Aorta (tissue), 5 donors: ENCODE measurements at regions of chr1 and their contacts with region 1.

Region 1: DNA sequence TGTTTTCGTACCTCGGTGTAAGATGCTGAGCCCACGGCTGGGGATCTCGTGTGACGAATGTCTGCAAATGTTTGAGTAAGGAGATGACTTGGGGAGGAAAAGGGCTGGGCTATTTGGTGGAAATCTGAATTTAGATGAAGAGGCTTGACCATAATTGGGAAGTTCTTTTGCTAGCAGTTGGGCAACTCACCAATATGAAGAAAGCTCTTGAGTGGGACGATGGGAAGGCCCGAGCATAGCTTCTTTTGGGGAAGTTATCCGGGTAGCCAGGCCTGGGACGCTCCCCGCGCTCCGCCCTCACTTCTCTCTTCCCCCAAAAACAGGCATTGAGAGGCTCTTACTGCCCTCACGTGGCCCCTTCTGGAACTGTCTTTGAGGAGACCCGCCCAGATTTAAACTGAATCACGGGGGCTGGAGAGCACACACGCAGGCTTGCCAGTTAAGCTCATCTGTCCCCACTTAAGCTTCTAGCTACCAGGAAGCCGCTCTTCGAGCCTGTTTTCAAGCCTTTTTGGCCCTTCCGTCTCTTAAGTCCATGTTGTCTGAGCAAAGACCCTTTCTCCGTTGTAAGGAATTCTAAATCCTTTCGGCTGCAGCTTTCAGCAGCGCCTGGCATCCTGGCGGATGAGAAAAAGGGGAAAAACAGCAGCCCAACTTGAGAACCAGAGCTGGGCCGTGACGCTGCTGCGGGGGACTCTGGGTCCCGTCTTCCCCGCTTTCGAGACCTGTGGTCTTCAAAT is 93.1 kb downstream of the NID1 start:
- DNase-seq: peak; percentile 96 to 97
- ATAC-seq: peak; percentile 97
- H3K4me3 ChIP-seq: peak overlapping the region in 1 of 2 donors; percentile 74
- H3K27ac ChIP-seq: peak overlapping the region; percentile 38 to 95
- H3K4me1 ChIP-seq: no peaks in the 10 kb centered on the region
- H3K27me3 ChIP-seq: no peaks in the 10 kb centered on the region

Region 2: DNA sequence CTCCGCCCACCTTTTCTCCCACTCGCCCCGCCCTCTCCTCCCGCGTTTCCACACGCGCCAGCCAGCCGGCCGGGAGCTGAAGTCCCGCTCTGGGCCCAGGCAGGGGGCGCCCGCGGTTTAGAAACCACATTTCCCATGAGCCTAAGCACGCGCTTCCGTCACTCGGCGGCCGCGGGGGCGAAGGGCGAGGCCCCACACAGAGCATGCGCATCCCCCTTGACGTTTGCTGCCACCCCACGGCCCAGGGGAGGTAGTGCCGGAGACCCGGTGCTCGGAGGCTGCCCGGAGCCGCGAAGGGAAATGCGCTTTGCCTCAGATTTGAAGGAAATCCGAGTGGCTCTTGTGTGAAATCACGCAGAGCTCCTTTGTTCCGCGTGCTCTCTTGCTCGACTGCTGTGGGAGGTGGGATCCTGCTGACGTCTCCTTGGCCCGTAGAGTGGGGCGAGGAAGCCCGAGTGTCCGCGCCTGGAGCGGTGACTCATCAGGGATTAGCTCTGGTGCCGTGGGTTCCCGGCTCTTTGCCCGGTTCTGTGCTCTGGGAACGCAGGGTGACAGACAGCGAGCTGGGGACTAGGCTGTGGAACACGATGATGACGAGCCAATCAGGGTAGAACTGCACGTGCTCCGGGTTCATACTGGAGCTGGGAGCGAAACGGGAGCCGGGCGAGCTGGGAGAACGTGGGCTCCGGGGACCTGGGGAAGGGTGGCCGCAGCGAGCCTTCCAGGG is 467.1 kb before region 1 on chr1:
- intact Hi-C with region 1: loop called in 1 of 2 experiments (anchors 5 kb)
- DNase-seq: peak; percentile 99 to 100
- ATAC-seq: peak; percentile 98
- H3K4me3 ChIP-seq: peak overlapping the region; percentile 46 to 96
- H3K27ac ChIP-seq: peak overlapping the region; percentile 93 to 96
- H3K4me1 ChIP-seq: peaks cover 0 to 4% of the 10 kb centered on the region in 2 donors
- H3K27me3 ChIP-seq: no peaks in the 10 kb centered on the region

Region 3: DNA sequence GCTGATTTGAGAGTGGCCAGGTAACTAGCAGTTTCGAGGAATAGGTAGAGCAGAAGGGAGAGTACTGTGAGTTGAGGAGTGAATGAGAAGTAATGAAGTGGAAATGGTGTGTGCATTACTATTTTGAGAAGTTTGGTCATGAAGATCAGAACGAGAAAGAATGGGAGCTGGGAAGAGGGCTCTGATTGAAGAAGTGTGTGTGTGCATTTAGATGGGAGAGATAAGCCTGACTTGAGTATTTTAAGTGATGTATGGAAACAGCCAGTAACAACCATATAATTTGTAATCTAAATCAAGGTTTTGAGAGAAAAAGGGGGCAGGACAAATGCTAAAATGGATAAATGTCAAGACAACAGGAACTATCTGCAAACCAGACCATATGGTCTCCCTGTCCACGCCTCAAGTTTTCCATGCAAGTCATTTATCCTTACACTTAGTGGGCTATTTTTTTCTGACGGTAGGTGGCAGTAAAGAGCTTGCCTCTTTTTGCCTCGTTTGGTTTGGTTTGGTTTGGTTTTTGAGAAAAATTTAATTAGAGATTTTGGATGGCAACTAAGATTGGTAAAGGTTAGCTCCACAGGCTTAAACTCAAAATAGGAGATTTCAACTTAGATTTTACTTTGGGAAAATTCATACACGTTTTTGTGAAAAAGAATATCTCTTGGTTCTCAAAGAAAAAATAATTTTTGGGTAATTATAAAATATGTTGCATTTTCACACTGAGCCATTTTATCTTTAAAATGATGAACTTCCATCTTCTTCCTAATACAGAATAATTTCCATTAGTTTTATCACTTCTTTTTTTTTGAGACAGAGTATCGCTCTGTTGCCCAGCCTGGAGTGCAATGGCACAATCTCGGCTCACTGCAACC is 458.0 kb before region 1 on chr1:
- intact Hi-C with region 1: loop called (anchors 5 to 10 kb)
- DNase-seq: no peak
- ATAC-seq: peak; percentile 71
- H3K4me3 ChIP-seq: no peak overlapping the region
- H3K27ac ChIP-seq: no peak overlapping the region
- H3K4me1 ChIP-seq: no peaks in the 10 kb centered on the region
- H3K27me3 ChIP-seq: no peaks in the 10 kb centered on the region

Region 4: DNA sequence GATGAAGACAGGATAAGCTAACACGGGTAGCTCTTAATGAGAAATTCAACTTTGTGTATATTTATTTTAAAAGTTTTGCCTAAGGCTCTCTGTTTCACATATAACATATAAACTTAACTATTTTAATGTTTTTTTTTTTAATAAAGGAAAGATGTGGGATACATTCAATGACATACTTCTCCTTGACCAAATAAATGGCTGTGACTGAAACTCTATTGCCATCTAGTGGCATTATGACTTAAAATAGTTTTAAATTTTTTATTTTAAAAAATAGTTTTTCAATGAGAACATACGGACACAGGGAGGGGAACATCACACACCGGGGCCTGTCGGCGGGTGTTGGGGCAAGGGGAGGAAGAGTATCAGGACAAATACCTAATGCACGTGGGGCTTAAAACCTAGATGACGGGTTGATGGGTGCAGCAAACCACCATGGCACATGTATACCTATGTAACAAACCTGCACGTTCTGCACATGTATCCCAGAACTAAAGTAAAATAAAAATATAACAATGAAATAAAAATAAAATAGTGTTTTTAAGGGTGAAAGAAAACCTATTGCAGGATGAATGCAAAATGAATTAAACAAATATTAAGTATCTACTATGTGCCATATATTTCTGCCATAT is 188.5 kb before region 1 on chr1:
- intact Hi-C with region 1: loop called in 1 of 2 experiments (anchors 5 kb)
- DNase-seq: no peak
- ATAC-seq: no peak
- H3K4me3 ChIP-seq: no peak overlapping the region
- H3K27ac ChIP-seq: no peak overlapping the region
- H3K4me1 ChIP-seq: no peaks in the 10 kb centered on the region
- H3K27me3 ChIP-seq: peaks cover 0 to 1% of the 10 kb centered on the region in 2 donors

Region 5: GRCh38 chr1:235831148-235831547 is 140.6 kb before region 1 on chr1:
- intact Hi-C with region 1: loop called in 1 of 2 experiments (anchors 10 kb)
- DNase-seq: peak in 1 of 2 donors; percentile 61
- ATAC-seq: no peak
- H3K4me3 ChIP-seq: no peak overlapping the region
- H3K27ac ChIP-seq: no peak overlapping the region
- H3K4me1 ChIP-seq: no peaks in the 10 kb centered on the region
- H3K27me3 ChIP-seq: no peaks in the 10 kb centered on the region

Region 6: GRCh38 chr1:235866913-235867845 is 104.6 kb before region 1 on chr1:
- intact Hi-C with region 1: loop called in 1 of 2 experiments (anchors 1 kb)
- DNase-seq: peak; percentile 97 to 99
- ATAC-seq: peak; percentile 98
- H3K4me3 ChIP-seq: peak overlapping the region; percentile 80 to 87
- H3K27ac ChIP-seq: peak overlapping the region; percentile 59 to 95
- H3K4me1 ChIP-seq: peaks cover 0 to 3% of the 10 kb centered on the region in 2 donors
- H3K27me3 ChIP-seq: no peaks in the 10 kb centered on the region

Region 7: GRCh38 chr1:235910357-235911299 is 61.1 kb before region 1 on chr1:
- intact Hi-C with region 1: loop called in 1 of 2 experiments (anchors 5 kb)
- DNase-seq: peak; percentile 69 to 87
- ATAC-seq: peak; percentile 81
- H3K4me3 ChIP-seq: no peak overlapping the region
- H3K27ac ChIP-seq: peak overlapping the region in 1 of 2 donors; percentile 91
- H3K4me1 ChIP-seq: no peaks in the 10 kb centered on the region
- H3K27me3 ChIP-seq: no peaks in the 10 kb centered on the region

Region 8: DNA sequence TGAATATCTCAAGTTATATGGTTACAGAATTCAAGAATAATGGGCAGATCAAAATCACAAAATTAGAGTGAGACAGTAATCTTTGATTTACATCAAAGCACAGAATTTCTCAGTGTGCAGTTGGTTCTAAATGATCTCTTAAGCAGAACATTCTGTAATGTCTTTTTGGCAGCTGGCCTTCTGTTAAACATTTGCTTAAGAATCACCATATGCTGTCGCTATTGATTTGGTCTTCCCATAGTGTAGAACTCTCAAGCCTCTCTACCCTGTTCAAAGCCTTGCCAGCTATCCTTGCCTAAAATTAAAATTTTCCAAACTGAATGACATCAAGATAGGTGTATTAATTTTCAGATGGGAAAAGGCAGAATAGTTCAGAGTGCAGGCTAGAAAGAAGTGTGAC is 348.9 kb after region 1 on chr1:
- intact Hi-C with region 1: no loop called
- DNase-seq: no peak
- ATAC-seq: no peak
- H3K4me3 ChIP-seq: no peak overlapping the region
- H3K27ac ChIP-seq: no peak overlapping the region
- H3K4me1 ChIP-seq: no peaks in the 10 kb centered on the region
- H3K27me3 ChIP-seq: no peaks in the 10 kb centered on the region